HepG2 (cell line): ENCODE measurements at regions of chr22 and their contacts with region 1.

Region 1: GRCh38 chr22:46649141-46650077 is 29.2 kb downstream of the GRAMD4 start:
- DNase-seq: no peak
- ATAC-seq: no peak
- H3K4me3 ChIP-seq: no peak overlapping the region
- H3K27ac ChIP-seq: no peak overlapping the region
- H3K4me1 ChIP-seq: peaks cover 68% of the 10 kb centered on the region
- H3K27me3 ChIP-seq: no peaks in the 10 kb centered on the region
- CTCF ChIP-seq: no peak
- EP300 ChIP-seq: no peak
- POLR2A ChIP-seq: no peak
- RAD21 ChIP-seq: no peak

Region 2: GRCh38 chr22:46576556-46577367 is 72.6 kb before region 1 on chr22:
- CTCF ChIA-PET with region 1: no interaction called
- POLR2A ChIA-PET with region 1: interaction called, 5 read pairs
- in situ Hi-C with region 1: loop called (anchors 25 kb)
- intact Hi-C with region 1: loop called (anchors 5 kb)
- DNase-seq: no peak
- ATAC-seq: no peak
- H3K4me3 ChIP-seq: peak overlapping the region in 2 of 3 experiments; percentile 63 to 80; a peak in 4 of 6 replicates
- H3K27ac ChIP-seq: no peak overlapping the region
- H3K4me1 ChIP-seq: peaks cover 75% of the 10 kb centered on the region
- H3K27me3 ChIP-seq: peaks cover 0 to 11% of the 10 kb centered on the region in 2 experiments; a peak in 2 of 5 replicates
- CTCF ChIP-seq: no peak
- EP300 ChIP-seq: no peak
- POLR2A ChIP-seq: no peak
- RAD21 ChIP-seq: no peak

Region 3: DNA sequence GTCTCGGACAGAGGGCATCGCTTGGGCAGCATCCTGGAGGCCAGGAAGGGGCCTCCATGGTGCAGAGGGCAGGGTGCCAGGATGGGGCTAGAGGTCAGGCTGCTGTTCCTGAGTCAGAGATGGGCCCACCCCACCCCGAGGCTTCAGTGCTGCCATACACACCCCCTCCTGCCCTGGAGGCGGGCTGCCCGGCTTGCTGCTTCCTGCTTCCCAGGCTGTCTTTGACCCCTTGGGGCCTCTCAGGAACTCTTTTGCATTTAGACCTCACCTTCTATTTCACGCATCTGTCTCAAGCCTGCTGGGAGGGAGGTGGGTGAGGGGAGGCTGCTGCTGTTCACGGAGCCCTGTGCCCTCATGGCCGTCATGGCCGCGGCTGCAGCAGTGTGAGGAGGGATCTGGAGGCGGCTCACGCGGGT is 35.8 kb before region 1 on chr22:
- CTCF ChIA-PET with region 1: interaction called, 3 read pairs
- POLR2A ChIA-PET with region 1: interaction called, 12 read pairs
- in situ Hi-C with region 1: no loop called
- intact Hi-C with region 1: loop called (anchors 2 kb)
- DNase-seq: no peak
- ATAC-seq: peak; percentile 14
- H3K4me3 ChIP-seq: peak overlapping the region in 1 of 3 experiments; percentile 61; a peak in 1 of 6 replicates
- H3K27ac ChIP-seq: peak overlapping the region; percentile 73
- H3K4me1 ChIP-seq: peaks cover 74% of the 10 kb centered on the region
- H3K27me3 ChIP-seq: no peaks in the 10 kb centered on the region
- CTCF ChIP-seq: no peak
- EP300 ChIP-seq: no peak
- POLR2A ChIP-seq: no peak
- RAD21 ChIP-seq: no peak

Region 4: DNA sequence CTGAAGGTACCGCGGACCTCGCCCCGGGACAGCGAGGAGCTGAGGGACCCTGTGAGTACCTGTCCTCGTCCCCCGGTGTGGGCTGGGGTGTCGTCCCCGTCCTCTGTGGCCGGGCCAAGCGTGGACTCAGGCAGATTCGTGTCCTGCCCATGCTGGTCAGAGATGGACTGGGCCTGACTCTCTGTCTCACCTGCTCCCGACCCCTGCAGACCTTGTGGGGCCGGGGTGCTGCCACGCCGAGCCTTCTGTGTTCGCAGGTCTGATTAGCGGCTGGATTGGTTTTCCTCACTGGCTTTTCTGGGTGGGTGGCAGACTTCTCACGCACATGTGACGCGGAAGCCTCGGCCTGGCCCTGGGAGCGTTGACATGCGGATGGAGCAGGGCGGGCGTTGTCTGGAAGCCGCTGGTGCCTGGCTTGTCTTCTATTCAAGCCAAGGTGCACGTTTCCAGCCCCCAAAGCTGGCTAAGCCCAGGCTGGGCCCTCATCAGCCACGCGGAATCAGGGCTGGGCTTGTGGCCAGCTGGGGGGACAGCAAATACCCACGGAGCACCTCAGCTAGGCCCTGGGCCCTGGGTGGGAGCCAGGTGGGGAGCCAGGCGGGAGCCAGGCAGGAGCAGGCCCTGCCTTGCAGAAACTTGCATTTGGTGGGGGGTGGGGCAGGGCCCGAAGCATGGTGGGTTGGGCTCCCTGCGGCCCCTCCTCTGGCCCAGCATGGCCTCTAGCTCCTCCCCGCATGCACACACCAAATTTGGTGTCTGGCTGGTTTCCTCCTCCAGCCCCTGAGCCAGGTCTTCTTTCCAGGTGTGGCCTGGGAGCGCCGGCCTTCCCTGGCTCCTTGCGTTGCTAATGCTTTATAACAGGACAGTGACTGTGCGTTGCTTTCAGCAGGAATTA is 22.3 kb before region 1 on chr22:
- CTCF ChIA-PET with region 1: no interaction called
- POLR2A ChIA-PET with region 1: no interaction called
- in situ Hi-C with region 1: no loop called
- intact Hi-C with region 1: no loop called
- DNase-seq: no peak
- ATAC-seq: no peak
- H3K4me3 ChIP-seq: no peak overlapping the region
- H3K27ac ChIP-seq: no peak overlapping the region
- H3K4me1 ChIP-seq: no peaks in the 10 kb centered on the region
- H3K27me3 ChIP-seq: no peaks in the 10 kb centered on the region
- CTCF ChIP-seq: no peak
- EP300 ChIP-seq: no peak
- POLR2A ChIP-seq: no peak
- RAD21 ChIP-seq: no peak